H1 (cell line): ENCODE measurements at regions of chr7 and their contacts with region 1.

Region 1: GRCh38 chr7:142478479-142479072 is 220.7 kb upstream of the PRSS58 start:
- DNase-seq: no peak
- H3K4me3 ChIP-seq: no peak overlapping the region
- H3K27ac ChIP-seq: no peak overlapping the region
- H3K4me1 ChIP-seq: peaks cover 0 to 2% (median 0%) of the 10 kb centered on the region in 4 experiments; a peak in 1 of 7 replicates
- H3K27me3 ChIP-seq: no peaks in the 10 kb centered on the region
- CTCF ChIP-seq: peak; percentile 48 to 76 (median 69)
- EP300 ChIP-seq: no peak
- POLR2A ChIP-seq: no peak
- RAD21 ChIP-seq: peak; percentile 41 to 54

Region 2: DNA sequence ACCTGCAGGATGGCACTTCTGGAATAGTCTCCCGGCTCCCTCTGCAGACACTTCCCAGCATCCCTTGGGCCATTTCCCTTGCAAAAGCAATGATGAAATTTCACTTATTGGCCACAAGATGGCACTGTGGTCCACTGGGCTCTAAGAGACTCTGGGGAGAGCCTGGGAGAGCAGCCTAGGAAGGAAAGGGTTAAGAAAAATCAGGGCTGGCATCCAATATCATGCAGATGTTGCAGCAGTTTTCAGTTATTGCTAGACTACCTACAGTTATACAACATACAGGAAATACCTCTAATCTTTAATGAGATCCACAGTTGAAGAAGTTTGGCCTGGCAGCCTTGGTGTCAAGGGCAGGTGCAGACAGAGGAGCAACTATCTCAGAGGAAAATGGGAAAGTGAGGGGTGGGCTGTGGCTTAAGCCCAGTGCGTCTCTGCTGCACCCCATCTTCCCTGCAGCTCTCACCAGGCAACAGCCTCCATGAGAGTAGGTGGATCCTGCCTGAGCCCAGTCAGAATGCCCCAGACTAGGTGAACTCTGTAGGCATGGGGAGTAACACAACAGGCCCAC is 120.5 kb before region 1 on chr7:
- CTCF ChIA-PET with region 1: interaction called, 199 read pairs
- POLR2A ChIA-PET with region 1: no interaction called
- DNase-seq: peak in 1 of 2 experiments; percentile 56
- H3K4me3 ChIP-seq: no peak overlapping the region
- H3K27ac ChIP-seq: no peak overlapping the region
- H3K4me1 ChIP-seq: peaks cover 5 to 13% (median 9%) of the 10 kb centered on the region in 4 experiments; a peak in 5 of 7 replicates
- H3K27me3 ChIP-seq: no peaks in the 10 kb centered on the region
- CTCF ChIP-seq: peak; percentile 32 to 86 (median 86)
- EP300 ChIP-seq: no peak
- POLR2A ChIP-seq: no peak
- RAD21 ChIP-seq: peak; percentile 78 to 88

Region 3: DNA sequence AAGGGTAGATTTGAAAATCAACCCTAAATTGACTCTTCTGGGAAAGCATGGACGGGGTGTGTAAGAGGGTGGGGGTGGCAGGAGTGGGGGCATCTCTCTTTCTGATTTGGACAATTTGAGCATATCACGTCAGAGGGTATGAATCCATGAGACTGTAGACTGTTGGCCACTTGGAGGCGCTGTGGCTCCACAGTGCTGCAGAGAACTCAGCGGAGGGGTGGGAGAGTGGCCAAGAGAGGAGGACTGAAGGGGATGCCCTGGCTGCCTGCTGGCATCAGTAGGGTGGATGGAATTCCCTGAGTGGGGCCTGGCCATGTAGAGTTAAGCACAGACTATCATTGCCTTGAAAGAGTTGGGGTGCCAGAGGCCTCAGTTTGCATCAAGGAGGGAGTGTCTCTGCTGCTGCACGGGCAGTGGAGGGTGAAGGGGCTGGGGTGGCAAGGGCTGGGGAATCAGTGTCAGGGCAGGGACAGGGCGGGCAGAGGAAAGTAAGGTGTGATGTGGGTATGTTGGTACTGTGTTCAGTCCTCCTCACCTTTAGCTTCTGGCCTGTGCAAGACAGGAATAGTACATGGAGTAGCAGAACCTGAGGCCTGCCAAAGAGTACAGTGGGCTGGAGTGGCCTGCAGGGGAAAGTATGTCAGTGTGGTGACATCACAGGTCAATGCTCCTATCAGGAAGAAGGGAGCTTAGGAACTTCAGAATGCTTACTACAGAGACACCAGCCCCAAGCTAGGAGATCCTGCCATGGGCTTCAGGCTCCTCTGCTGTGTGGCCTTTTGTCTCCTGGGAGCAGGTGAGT is 87.2 kb before region 1 on chr7:
- CTCF ChIA-PET with region 1: interaction called, 43 read pairs
- POLR2A ChIA-PET with region 1: no interaction called
- DNase-seq: peak; percentile 38 to 88
- H3K4me3 ChIP-seq: no peak overlapping the region
- H3K27ac ChIP-seq: no peak overlapping the region
- H3K4me1 ChIP-seq: no peaks in the 10 kb centered on the region; a peak in 1 of 7 replicates
- H3K27me3 ChIP-seq: no peaks in the 10 kb centered on the region
- CTCF ChIP-seq: peak; percentile 90 to 93 (median 90)
- EP300 ChIP-seq: no peak
- POLR2A ChIP-seq: no peak
- RAD21 ChIP-seq: peak; percentile 90 to 91

Region 4: GRCh38 chr7:142438235-142438922 is 40.2 kb before region 1 on chr7:
- CTCF ChIA-PET with region 1: interaction called, 247 read pairs
- POLR2A ChIA-PET with region 1: no interaction called
- DNase-seq: peak in 1 of 2 experiments; percentile 61
- H3K4me3 ChIP-seq: no peak overlapping the region
- H3K27ac ChIP-seq: no peak overlapping the region
- H3K4me1 ChIP-seq: peaks cover 0 to 10% (median 0%) of the 10 kb centered on the region in 4 experiments; a peak in 1 of 7 replicates
- H3K27me3 ChIP-seq: no peaks in the 10 kb centered on the region
- CTCF ChIP-seq: peak; percentile 95 to 99 (median 95)
- EP300 ChIP-seq: 0 out of 3 replicates have a peak, but pooled peaks of 1 of the 2 experiments have one; percentile 23
- POLR2A ChIP-seq: no peak
- RAD21 ChIP-seq: peak; percentile 70 to 83

Region 5: GRCh38 chr7:142496545-142497041 is 18.0 kb after region 1 on chr7:
- CTCF ChIA-PET with region 1: interaction called, 514 read pairs
- POLR2A ChIA-PET with region 1: no interaction called
- DNase-seq: no peak
- H3K4me3 ChIP-seq: no peak overlapping the region
- H3K27ac ChIP-seq: no peak overlapping the region
- H3K4me1 ChIP-seq: no peaks in the 10 kb centered on the region
- H3K27me3 ChIP-seq: no peaks in the 10 kb centered on the region
- CTCF ChIP-seq: peak; percentile 58 to 83 (median 78)
- EP300 ChIP-seq: no peak
- POLR2A ChIP-seq: no peak
- RAD21 ChIP-seq: peak; percentile 37 to 61